ENCODE measurements at regions of chr10 and their contacts with region 1.

Region 1: GRCh38 chr10:3805791-3806461 is 20.9 kb upstream of the KLF6 start:
- DNase-seq: peak in 1 of 2 donors; percentile 65
- ATAC-seq: peak in 2 of 4 donors; percentile 4 to 18
- H3K4me3 ChIP-seq: peak overlapping the region; percentile 35
- H3K27ac ChIP-seq: peak overlapping the region; percentile 95
- H3K4me1 ChIP-seq: peaks cover 67% of the 10 kb centered on the region
- H3K27me3 ChIP-seq: no peaks in the 10 kb centered on the region
- CTCF ChIP-seq: no peak

Region 2: DNA sequence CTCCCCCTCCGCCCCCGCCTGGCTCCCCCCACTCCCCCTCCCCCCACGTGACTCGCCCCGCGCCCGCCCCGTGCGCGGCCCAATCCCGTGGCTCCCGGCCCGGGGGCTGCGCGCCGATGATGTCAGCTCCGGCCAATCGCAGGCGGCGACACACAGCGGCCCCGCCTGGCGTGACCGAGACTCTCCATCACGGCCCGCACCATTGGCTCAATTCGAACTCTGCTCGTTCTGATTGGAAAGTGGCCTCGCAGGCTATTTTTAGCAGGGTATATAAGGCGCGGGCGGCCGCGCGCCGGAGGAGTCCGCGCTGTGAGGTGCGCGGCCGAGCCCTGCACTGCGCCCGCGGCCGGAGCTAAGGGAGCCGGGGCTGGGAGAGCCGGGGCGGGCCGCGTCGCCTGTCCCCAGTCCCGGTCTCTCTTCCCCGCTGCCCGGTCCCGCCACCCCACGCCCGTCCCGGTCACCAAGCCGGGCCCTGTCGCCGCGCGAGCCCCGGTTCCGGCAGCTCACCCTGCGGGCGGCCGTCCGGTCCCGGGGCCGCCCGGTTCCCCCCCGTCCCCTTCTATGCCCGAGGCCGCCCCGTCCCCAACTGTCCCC is 20.6 kb before region 1 on chr10:
- intact Hi-C with region 1: loop called (anchors 1 kb)
- DNase-seq: peak; percentile 99 to 100
- ATAC-seq: peak; percentile 69 to 84 (median 78)
- H3K4me3 ChIP-seq: peak overlapping the region; percentile 95
- H3K27ac ChIP-seq: peak overlapping the region; percentile 100
- H3K4me1 ChIP-seq: peaks cover 10% of the 10 kb centered on the region
- H3K27me3 ChIP-seq: no peaks in the 10 kb centered on the region
- CTCF ChIP-seq: no peak

Region 3: GRCh38 chr10:4241724-4242345 is 435.9 kb after region 1 on chr10:
- intact Hi-C with region 1: loop called in 1 of 2 experiments (anchors 5 kb)
- DNase-seq: no peak
- ATAC-seq: peak; percentile 50 to 79 (median 64)
- H3K4me3 ChIP-seq: peak overlapping the region; percentile 48
- H3K27ac ChIP-seq: peak overlapping the region; percentile 73
- H3K4me1 ChIP-seq: peaks cover 33% of the 10 kb centered on the region
- H3K27me3 ChIP-seq: no peaks in the 10 kb centered on the region
- CTCF ChIP-seq: no peak

Region 4: GRCh38 chr10:4663162-4663904 is 857.4 kb after region 1 on chr10:
- intact Hi-C with region 1: loop called in 1 of 2 experiments (anchors 2 kb)
- DNase-seq: peak; percentile 52 to 70
- ATAC-seq: peak; percentile 81 to 91 (median 85)
- H3K4me3 ChIP-seq: peak overlapping the region; percentile 55
- H3K27ac ChIP-seq: peak overlapping the region; percentile 91
- H3K4me1 ChIP-seq: peaks cover 38% of the 10 kb centered on the region
- H3K27me3 ChIP-seq: no peaks in the 10 kb centered on the region
- CTCF ChIP-seq: no peak